GM12878 (cell line): ENCODE measurements at regions of chr1 and their contacts with region 1.

Region 1: DNA sequence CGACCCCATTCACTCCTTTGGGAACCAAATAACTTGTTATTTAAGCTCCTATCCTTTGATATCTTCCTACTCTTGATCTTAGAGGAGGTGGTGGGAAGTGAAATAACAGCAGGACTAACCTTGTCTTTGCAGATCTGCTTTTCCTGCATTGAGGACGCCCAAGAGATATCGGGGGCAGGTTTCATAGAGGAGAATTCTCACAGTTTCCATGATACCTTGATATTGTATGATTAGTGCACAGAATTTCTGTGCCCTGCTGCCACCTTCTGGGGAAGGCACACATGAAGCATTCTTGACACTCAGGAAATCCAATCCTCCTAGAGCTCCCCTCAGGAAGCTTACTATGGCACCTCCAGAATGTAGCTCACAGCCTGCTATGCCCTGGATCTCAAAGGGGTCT is 1.6 kb downstream of the CD1B start:
- DNase-seq: no peak
- ATAC-seq: peak; percentile 84
- H3K4me3 ChIP-seq: no peak overlapping the region
- H3K27ac ChIP-seq: no peak overlapping the region
- H3K4me1 ChIP-seq: peaks cover 5% of the 10 kb centered on the region
- H3K27me3 ChIP-seq: no peaks in the 10 kb centered on the region
- CTCF ChIP-seq: peak; percentile 61 to 69 (median 63)
- EP300 ChIP-seq: no peak
- POLR2A ChIP-seq: no peak
- RAD21 ChIP-seq: peak; percentile 80

Region 2: DNA sequence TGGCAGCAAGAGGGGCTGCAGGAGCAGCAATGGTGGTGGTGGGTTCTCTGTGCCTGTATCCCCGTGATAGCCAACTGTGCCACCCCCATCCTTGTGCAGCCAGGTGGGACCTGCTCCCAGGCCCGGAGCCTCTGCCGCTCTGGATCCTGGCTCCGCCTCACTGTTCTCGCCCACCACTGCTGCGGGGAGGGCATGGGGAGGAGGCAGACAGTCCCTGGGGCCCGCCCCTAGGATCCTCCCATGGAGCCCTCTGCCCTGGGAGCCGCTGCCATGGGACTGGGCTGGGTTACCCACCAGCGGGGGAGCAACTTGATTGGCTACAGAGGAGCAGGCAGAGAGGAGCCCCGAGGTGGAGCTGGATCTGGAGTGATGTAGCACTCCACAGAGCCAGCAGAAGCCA is 117.4 kb before region 1 on chr1:
- CTCF ChIA-PET with region 1: interaction called, 267 read pairs
- POLR2A ChIA-PET with region 1: no interaction called
- RAD21 ChIA-PET with region 1: interaction called, 179 read pairs
- SMC1A ChIA-PET with region 1: interaction called, 3 read pairs
- in situ Hi-C with region 1: loop called (anchors 10 kb)
- intact Hi-C with region 1: no loop called
- DNase-seq: no peak
- ATAC-seq: no peak
- H3K4me3 ChIP-seq: no peak overlapping the region
- H3K27ac ChIP-seq: no peak overlapping the region
- H3K4me1 ChIP-seq: no peaks in the 10 kb centered on the region
- H3K27me3 ChIP-seq: 0 out of 4 replicates have a peak, but pooled peaks cover 0 to 2% of the 10 kb centered on the region in 2 experiments
- CTCF ChIP-seq: no peak
- EP300 ChIP-seq: no peak
- POLR2A ChIP-seq: no peak
- RAD21 ChIP-seq: no peak

Region 3: GRCh38 chr1:158248118-158248517 is 81.6 kb before region 1 on chr1:
- CTCF ChIA-PET with region 1: interaction called, 105 read pairs
- POLR2A ChIA-PET with region 1: interaction called, 3 read pairs
- RAD21 ChIA-PET with region 1: interaction called, 93 read pairs
- SMC1A ChIA-PET with region 1: interaction called, 123 read pairs
- in situ Hi-C with region 1: no loop called
- intact Hi-C with region 1: loop called (anchors 1 kb)
- DNase-seq: peak; percentile 13
- ATAC-seq: peak; percentile 71
- H3K4me3 ChIP-seq: no peak overlapping the region
- H3K27ac ChIP-seq: no peak overlapping the region
- H3K4me1 ChIP-seq: peaks cover 9% of the 10 kb centered on the region
- H3K27me3 ChIP-seq: no peaks in the 10 kb centered on the region
- CTCF ChIP-seq: no peak
- EP300 ChIP-seq: no peak
- POLR2A ChIP-seq: no peak
- RAD21 ChIP-seq: no peak

Region 4: DNA sequence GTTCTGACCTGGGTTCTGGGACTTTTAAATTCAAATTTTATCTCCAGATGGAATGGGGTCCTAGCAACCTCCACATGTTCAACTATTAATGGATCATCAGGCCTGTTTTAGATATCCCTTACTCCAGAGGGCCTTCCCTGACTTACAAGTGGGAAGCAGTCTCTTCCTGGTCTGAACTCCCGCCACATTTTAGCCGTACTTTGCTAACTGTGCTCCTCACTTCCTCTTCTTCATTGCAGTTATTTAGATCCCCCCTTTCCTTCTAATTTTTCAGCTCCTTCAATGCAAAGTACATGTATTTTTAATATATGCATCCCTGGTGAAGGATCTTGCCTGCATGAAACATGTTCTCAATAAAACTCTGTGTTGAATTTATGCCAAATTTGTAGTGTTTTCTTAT is 71.8 kb before region 1 on chr1:
- CTCF ChIA-PET with region 1: interaction called, 27 read pairs
- POLR2A ChIA-PET with region 1: no interaction called
- RAD21 ChIA-PET with region 1: interaction called, 7 read pairs
- SMC1A ChIA-PET with region 1: interaction called, 10 read pairs
- in situ Hi-C with region 1: no loop called
- intact Hi-C with region 1: no loop called
- DNase-seq: no peak
- ATAC-seq: no peak
- H3K4me3 ChIP-seq: no peak overlapping the region
- H3K27ac ChIP-seq: no peak overlapping the region
- H3K4me1 ChIP-seq: no peaks in the 10 kb centered on the region
- H3K27me3 ChIP-seq: peaks cover 0 to 5% of the 10 kb centered on the region in 2 experiments; a peak in 1 of 4 replicates
- CTCF ChIP-seq: no peak
- EP300 ChIP-seq: no peak
- POLR2A ChIP-seq: no peak
- RAD21 ChIP-seq: no peak